ENCODE measurements at regions of chr2 and their contacts with region 1.

Region 1: GRCh38 chr2:88669371-88670214 is 21.9 kb upstream of the RPIA start:
- DNase-seq: peak; percentile 5
- H3K4me3 Mint-ChIP-seq: no peak overlapping the region
- H3K27ac Mint-ChIP-seq: no peak overlapping the region
- H3K4me1 Mint-ChIP-seq: peaks cover 5% of the 10 kb centered on the region
- H3K27me3 Mint-ChIP-seq: peaks cover 4% of the 10 kb centered on the region

Region 2: DNA sequence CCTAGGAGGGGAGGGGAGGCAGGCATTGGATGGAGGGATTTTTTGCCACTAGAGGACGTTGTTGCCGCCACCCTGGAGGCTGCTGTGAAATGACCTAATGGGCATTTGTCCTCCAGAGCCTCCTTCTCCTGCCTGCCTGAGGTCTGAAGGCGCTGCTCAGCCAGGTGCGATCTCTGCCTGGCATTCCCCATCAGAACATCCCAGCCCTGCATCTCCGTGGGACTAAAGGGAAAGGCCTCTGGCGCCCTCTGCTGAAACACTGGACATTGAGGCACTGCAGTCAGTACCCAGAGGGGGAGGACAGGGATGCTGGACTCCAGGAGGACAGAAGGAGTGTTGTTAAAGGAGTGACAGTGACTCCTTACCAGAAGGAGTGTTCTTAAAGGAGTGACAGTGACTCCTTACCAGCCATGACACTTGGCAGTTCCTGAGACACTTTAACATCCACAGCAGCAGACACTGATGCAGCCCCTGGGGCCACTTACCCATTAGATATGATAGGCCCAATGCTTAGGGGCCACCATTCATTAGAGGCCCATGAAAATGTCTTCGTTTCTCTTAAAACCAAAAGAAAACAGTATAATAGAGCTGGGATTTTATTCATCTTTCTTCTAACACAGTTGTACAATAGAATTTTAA is 482.4 kb before region 1 on chr2:
- intact Hi-C with region 1: loop called (anchors 5 kb)
- DNase-seq: no peak
- H3K4me3 Mint-ChIP-seq: no peak overlapping the region
- H3K27ac Mint-ChIP-seq: no peak overlapping the region
- H3K4me1 Mint-ChIP-seq: peaks cover 16% of the 10 kb centered on the region
- H3K27me3 Mint-ChIP-seq: peaks cover 14% of the 10 kb centered on the region

Region 3: GRCh38 chr2:88350331-88351248 is 319.0 kb before region 1 on chr2:
- intact Hi-C with region 1: loop called (anchors 5 kb)
- DNase-seq: peak; percentile 53
- H3K4me3 Mint-ChIP-seq: peak overlapping the region; percentile 47
- H3K27ac Mint-ChIP-seq: no peak overlapping the region
- H3K4me1 Mint-ChIP-seq: peaks cover 9% of the 10 kb centered on the region
- H3K27me3 Mint-ChIP-seq: peaks cover 14% of the 10 kb centered on the region

Region 4: DNA sequence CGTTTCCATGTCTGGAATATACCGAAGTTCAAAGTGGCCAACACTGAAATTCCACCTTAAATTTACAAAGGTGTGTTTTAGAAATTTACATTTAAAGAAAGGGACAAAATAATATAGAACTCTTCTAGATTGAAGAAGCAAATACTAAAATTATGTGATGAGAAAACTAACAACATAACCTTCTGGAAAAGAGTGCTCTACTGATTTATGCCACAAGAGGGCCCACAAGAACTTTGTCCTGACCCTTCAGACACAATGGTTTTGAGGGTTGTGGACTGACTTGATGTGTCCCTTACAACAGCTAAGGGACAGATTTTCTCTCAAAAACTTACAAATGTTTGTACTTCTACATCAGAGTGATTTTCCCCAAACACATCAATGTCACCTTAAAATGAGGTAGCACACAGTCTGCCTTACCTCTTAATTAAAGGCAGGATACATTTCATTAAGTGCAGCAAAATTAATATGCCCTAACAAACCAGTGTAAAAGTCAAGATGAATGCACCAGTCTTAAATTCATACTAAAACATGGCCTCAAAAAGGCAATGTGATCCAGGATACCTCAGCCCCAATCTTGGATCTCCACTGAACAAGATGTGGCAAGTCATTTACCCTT is 78.5 kb before region 1 on chr2:
- intact Hi-C with region 1: loop called (anchors 1 kb)
- DNase-seq: peak; percentile 19
- H3K4me3 Mint-ChIP-seq: no peak overlapping the region
- H3K27ac Mint-ChIP-seq: no peak overlapping the region
- H3K4me1 Mint-ChIP-seq: no peaks in the 10 kb centered on the region
- H3K27me3 Mint-ChIP-seq: no peaks in the 10 kb centered on the region

Region 5: GRCh38 chr2:88600038-88600465 is 69.5 kb before region 1 on chr2:
- intact Hi-C with region 1: loop called (anchors 2 kb)
- DNase-seq: peak; percentile 58
- H3K4me3 Mint-ChIP-seq: no peak overlapping the region
- H3K27ac Mint-ChIP-seq: peak overlapping the region; percentile 64
- H3K4me1 Mint-ChIP-seq: peaks cover 49% of the 10 kb centered on the region
- H3K27me3 Mint-ChIP-seq: no peaks in the 10 kb centered on the region

Region 6: GRCh38 chr2:88627056-88627855 is 42.3 kb before region 1 on chr2 and contains the start of gene EIF2AK3:
- intact Hi-C with region 1: loop called (anchors 1 kb)
- DNase-seq: peak; percentile 96
- H3K4me3 Mint-ChIP-seq: peak within 1 kb of the TSS; percentile 94
- H3K27ac Mint-ChIP-seq: peak within 1 kb of the TSS; percentile 88
- H3K4me1 Mint-ChIP-seq: peaks cover 5% of the 10 kb centered on the region
- H3K27me3 Mint-ChIP-seq: no peaks in the 10 kb centered on the region
- total RNA-seq, gene EIF2AK3: 28.7 and 29.6 TPM in 2 replicates

Region 7: DNA sequence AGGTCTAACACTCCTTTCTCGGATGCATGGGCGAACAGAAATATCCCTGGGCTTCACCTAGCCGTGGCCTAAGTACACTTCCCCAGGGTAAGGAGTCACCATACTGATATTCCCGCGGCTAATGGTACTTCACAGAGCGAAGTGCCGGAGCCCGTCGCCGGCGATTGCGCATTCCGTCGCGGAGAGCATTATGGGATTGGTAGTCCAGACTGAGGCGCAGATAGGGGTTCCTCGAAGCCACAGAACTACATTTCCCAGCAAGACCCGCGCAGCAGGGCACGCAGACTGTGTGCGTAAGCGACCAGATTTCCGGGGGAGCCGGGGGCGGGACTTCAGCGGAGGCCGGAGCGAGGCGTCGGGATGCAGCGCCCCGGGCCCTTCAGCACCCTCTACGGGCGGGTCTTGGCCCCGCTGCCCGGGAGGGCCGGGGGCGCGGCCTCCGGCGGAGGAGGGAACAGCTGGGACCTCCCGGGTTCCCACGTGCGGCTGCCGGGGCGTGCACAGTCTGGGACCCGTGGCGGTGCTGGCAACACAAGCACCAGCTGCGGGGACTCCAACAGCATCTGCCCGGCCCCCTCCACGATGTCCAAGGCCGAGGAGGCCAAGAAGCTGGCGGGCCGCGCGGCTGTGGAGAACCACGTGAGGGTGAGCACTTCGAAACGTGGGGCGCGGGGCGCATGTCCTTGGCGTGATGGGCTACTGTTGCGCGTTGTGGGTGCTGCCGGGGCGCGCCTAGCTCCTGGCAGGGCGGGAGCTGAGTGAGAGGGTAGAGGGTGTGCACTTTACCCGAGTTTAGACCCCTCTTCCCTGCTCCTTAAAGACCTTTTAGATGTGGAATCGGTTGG is 22.0 kb after region 1 on chr2 and contains the start of gene RPIA:
- intact Hi-C with region 1: loop called (anchors 1 kb)
- DNase-seq: peak; percentile 98
- H3K4me3 Mint-ChIP-seq: peak within 1 kb of the TSS; percentile 96
- H3K27ac Mint-ChIP-seq: peak within 1 kb of the TSS; percentile 91
- H3K4me1 Mint-ChIP-seq: peaks cover 41% of the 10 kb centered on the region
- H3K27me3 Mint-ChIP-seq: no peaks in the 10 kb centered on the region
- total RNA-seq, gene RPIA: 79.1 and 83.1 TPM in 2 replicates

Region 8: GRCh38 chr2:88967844-88968243 is 298.3 kb after region 1 on chr2:
- intact Hi-C with region 1: no loop called
- DNase-seq: no peak
- H3K4me3 Mint-ChIP-seq: no peak overlapping the region
- H3K27ac Mint-ChIP-seq: no peak overlapping the region
- H3K4me1 Mint-ChIP-seq: no peaks in the 10 kb centered on the region
- H3K27me3 Mint-ChIP-seq: peaks cover 14% of the 10 kb centered on the region